IMR-90 (cell line): ENCODE measurements at regions of chr18 and their contacts with region 1.

Region 1: DNA sequence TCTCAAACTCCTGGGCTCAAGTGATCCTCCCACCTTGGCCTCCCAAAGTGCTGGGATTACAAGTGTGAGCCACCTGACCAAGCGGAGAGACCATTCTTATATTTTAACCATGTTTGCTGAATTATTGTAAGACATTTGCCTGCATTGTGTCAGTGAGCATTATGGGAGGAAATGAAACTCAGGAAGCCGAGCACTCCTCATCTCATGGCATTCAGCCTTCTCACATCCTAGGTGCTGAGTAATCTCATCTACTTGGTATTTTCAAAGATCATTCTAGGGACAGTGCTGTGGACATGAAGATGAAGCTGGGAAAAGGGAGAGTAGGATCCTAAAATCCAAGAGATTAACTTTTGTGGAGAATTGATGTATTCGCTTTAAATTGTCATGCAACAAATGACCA is 66.1 kb downstream of the NAPG start:
- DNase-seq: no peak
- ATAC-seq: no peak
- H3K4me3 ChIP-seq: no peak overlapping the region
- H3K27ac ChIP-seq: no peak overlapping the region
- H3K4me1 ChIP-seq: no peaks in the 10 kb centered on the region
- H3K27me3 ChIP-seq: no peaks in the 10 kb centered on the region
- CTCF ChIP-seq: no peak
- POLR2A ChIP-seq: no peak
- RAD21 ChIP-seq: no peak

Region 2: GRCh38 chr18:11052800-11053199 is 460.9 kb after region 1 on chr18:
- CTCF ChIA-PET with region 1: no interaction called
- POLR2A ChIA-PET with region 1: no interaction called
- dilution Hi-C with region 1: no loop called
- in situ Hi-C with region 1: no loop called
- intact Hi-C with region 1: no loop called
- DNase-seq: peak; percentile 81
- ATAC-seq: no peak
- H3K4me3 ChIP-seq: no peak overlapping the region
- H3K27ac ChIP-seq: no peak overlapping the region
- H3K4me1 ChIP-seq: peaks cover 4% of the 10 kb centered on the region; the same call in 1 of the 2 replicates
- H3K27me3 ChIP-seq: no peaks in the 10 kb centered on the region
- CTCF ChIP-seq: no peak
- POLR2A ChIP-seq: no peak
- RAD21 ChIP-seq: no peak

Region 3: DNA sequence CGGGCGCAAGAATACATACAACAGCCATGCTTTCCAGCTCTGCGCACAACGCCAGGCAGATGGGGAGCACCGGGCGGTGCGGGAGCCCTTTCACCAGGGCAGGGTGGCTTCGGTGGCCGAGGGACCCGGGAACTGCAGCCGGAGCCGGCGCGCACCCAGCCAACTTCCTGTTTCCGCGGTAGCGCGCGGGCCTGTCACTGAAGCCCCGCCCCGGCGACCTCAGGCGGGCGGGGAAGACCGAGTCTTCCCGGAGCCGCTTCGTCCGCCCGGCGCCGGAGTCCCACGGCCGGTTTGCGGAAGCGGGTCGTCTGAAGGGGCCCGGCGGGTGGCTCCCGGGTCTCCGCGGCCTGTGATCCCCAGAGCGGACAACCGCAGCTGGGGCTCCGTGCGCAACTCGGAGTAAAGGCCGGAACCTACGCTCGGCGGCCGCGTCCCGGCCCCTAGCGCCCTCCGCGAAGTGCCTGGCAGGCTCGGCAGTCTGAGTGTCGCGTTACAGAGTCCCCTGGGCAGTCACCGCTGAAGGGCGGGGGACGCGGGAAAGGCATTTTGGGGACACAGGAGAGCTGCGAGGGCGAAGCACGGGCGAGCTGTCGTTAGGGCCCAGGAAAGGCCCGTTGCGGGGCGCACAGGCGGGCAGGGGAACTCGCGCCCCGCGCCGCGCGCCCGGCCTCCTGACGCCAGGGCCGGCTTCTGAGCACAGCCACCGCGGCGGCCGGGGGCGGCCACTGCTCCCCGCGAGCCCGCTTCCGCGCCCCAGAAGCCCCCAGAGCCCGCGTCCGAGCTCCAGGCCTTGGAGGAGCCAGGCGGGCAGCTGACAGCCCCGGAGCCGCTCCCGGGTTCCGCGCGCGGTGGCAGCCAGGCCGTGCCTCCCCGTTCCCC is 1316.5 kb after region 1 on chr18 and contains the start of gene MPPE1:
- CTCF ChIA-PET with region 1: no interaction called
- POLR2A ChIA-PET with region 1: no interaction called
- dilution Hi-C with region 1: no loop called
- in situ Hi-C with region 1: no loop called
- intact Hi-C with region 1: loop called (anchors 10 kb)
- DNase-seq: peak; percentile 83
- ATAC-seq: peak; percentile 93
- H3K4me3 ChIP-seq: peak within 1 kb of the TSS; percentile 86
- H3K27ac ChIP-seq: peak within 1 kb of the TSS; percentile 83
- H3K4me1 ChIP-seq: peaks cover 6% of the 10 kb centered on the region
- H3K27me3 ChIP-seq: no peaks in the 10 kb centered on the region
- CTCF ChIP-seq: no peak
- POLR2A ChIP-seq: peak; percentile 86
- RAD21 ChIP-seq: no peak
- total RNA-seq, gene MPPE1: 13.8 and 22.5 TPM in 2 replicates